HepG2 (cell line): ENCODE measurements at regions of chr1 and their contacts with region 1.

Region 1: GRCh38 chr1:77888081-77888780 is at the start of gene NEXN:
- DNase-seq: peak; percentile 44
- ATAC-seq: peak; percentile 89
- H3K4me3 ChIP-seq: peak within 1 kb of the TSS; percentile 71 to 96 (median 85)
- H3K27ac ChIP-seq: peak within 1 kb of the TSS; percentile 51
- H3K4me1 ChIP-seq: peaks cover 13% of the 10 kb centered on the region
- H3K27me3 ChIP-seq: no peaks in the 10 kb centered on the region; a peak in 1 of 5 replicates
- CTCF ChIP-seq: peak; percentile 47
- EP300 ChIP-seq: no peak
- POLR2A ChIP-seq: peak in 1 of 2 experiments; percentile 38; a peak in 1 of 4 replicates
- RAD21 ChIP-seq: no peak
- total RNA-seq, gene NEXN: 0.97 and 1.1 TPM in 2 replicates

Region 2: DNA sequence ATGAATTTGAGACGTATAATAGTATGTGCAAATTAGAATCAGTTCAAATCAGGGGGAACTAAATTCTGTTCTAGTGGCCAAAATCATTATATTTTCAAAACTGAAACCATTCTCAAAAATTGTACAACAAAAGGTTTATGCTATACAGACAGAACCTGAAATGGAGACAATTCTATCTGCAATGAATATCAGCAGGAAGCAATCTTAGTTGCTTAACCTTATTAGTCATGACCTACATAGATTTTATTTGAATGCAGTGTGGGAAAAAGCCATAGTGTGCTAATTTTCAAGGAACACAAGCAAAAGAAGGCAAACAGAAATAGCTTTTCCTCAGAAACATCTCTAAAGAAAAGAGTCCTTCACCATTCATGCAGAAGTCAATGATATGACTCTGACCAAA is 600.0 kb before region 1 on chr1:
- CTCF ChIA-PET with region 1: no interaction called
- POLR2A ChIA-PET with region 1: no interaction called
- in situ Hi-C with region 1: no loop called
- intact Hi-C with region 1: no loop called
- DNase-seq: no peak
- ATAC-seq: no peak
- H3K4me3 ChIP-seq: no peak overlapping the region
- H3K27ac ChIP-seq: no peak overlapping the region
- H3K4me1 ChIP-seq: no peaks in the 10 kb centered on the region
- H3K27me3 ChIP-seq: peaks cover 0 to 12% of the 10 kb centered on the region in 2 experiments; a peak in 1 of 5 replicates
- CTCF ChIP-seq: no peak
- EP300 ChIP-seq: no peak
- POLR2A ChIP-seq: no peak
- RAD21 ChIP-seq: no peak

Region 3: GRCh38 chr1:77759071-77760028 is 128.9 kb before region 1 on chr1 and contains the start of gene USP33:
- CTCF ChIA-PET with region 1: no interaction called
- POLR2A ChIA-PET with region 1: no interaction called
- in situ Hi-C with region 1: no loop called
- intact Hi-C with region 1: loop called (anchors 5 kb)
- DNase-seq: peak; percentile 72
- ATAC-seq: peak; percentile 96
- H3K4me3 ChIP-seq: peak within 1 kb of the TSS; percentile 92 to 95 (median 94)
- H3K27ac ChIP-seq: peak within 1 kb of the TSS; percentile 91
- H3K4me1 ChIP-seq: peaks cover 29% of the 10 kb centered on the region
- H3K27me3 ChIP-seq: no peaks in the 10 kb centered on the region; a peak in 1 of 5 replicates
- CTCF ChIP-seq: 0 out of 2 replicates have a peak, but pooled peaks have one; percentile 10
- EP300 ChIP-seq: no peak
- POLR2A ChIP-seq: peak; percentile 75 to 85
- RAD21 ChIP-seq: no peak
- total RNA-seq, gene USP33: 48.2 and 49.1 TPM in 2 replicates

Region 4: GRCh38 chr1:77825131-77825709 is 63.0 kb before region 1 on chr1:
- CTCF ChIA-PET with region 1: no interaction called
- POLR2A ChIA-PET with region 1: no interaction called
- in situ Hi-C with region 1: no loop called
- intact Hi-C with region 1: loop called (anchors 5 kb)
- DNase-seq: peak; percentile 44
- ATAC-seq: peak; percentile 76
- H3K4me3 ChIP-seq: no peak overlapping the region
- H3K27ac ChIP-seq: no peak overlapping the region
- H3K4me1 ChIP-seq: no peaks in the 10 kb centered on the region
- H3K27me3 ChIP-seq: no peaks in the 10 kb centered on the region
- CTCF ChIP-seq: peak; percentile 47
- EP300 ChIP-seq: no peak
- POLR2A ChIP-seq: no peak
- RAD21 ChIP-seq: no peak